Activated T-helper 1 cell treated with anti-CD3 and anti-CD28 coated beads, Interleukin-12 subunit alpha, Interleukin-12 subunit beta, Interleukin-2, Interleukin-4 antibody, amounts not matched to agents 30 ng/mL and 10 ng/mL and 1 ng/mL, durations not matched to agents 14 hours and 24 hours and 36 hours (primary cell): ENCODE measurements at regions of chr7 and their contacts with region 1.

Region 1: GRCh38 chr7:101217388-101218235 is at the starts of genes PLOD3 and ZNHIT1:
- DNase-seq: peak; percentile 92
- H3K4me3 Mint-ChIP-seq: peak within 1 kb of the TSS; percentile 99
- H3K27ac Mint-ChIP-seq: peak within 1 kb of the TSS; percentile 92
- H3K4me1 Mint-ChIP-seq: peaks cover 35% of the 10 kb centered on the region
- H3K27me3 Mint-ChIP-seq: no peaks in the 10 kb centered on the region
- total RNA-seq, gene PLOD3: 65.2 and 68.9 TPM in 2 replicates
- total RNA-seq, gene ZNHIT1: 49.7 and 53.4 TPM in 2 replicates

Region 2: GRCh38 chr7:101085162-101085987 is 132.2 kb before region 1 on chr7 and contains the start of gene TRIM56:
- intact Hi-C with region 1: loop called (anchors 2 kb)
- DNase-seq: peak; percentile 76
- H3K4me3 Mint-ChIP-seq: peak within 1 kb of the TSS; percentile 98
- H3K27ac Mint-ChIP-seq: peak within 1 kb of the TSS; percentile 98
- H3K4me1 Mint-ChIP-seq: peaks cover 31% of the 10 kb centered on the region
- H3K27me3 Mint-ChIP-seq: no peaks in the 10 kb centered on the region
- total RNA-seq, gene TRIM56: 41.2 and 45.7 TPM in 2 replicates

Region 3: DNA sequence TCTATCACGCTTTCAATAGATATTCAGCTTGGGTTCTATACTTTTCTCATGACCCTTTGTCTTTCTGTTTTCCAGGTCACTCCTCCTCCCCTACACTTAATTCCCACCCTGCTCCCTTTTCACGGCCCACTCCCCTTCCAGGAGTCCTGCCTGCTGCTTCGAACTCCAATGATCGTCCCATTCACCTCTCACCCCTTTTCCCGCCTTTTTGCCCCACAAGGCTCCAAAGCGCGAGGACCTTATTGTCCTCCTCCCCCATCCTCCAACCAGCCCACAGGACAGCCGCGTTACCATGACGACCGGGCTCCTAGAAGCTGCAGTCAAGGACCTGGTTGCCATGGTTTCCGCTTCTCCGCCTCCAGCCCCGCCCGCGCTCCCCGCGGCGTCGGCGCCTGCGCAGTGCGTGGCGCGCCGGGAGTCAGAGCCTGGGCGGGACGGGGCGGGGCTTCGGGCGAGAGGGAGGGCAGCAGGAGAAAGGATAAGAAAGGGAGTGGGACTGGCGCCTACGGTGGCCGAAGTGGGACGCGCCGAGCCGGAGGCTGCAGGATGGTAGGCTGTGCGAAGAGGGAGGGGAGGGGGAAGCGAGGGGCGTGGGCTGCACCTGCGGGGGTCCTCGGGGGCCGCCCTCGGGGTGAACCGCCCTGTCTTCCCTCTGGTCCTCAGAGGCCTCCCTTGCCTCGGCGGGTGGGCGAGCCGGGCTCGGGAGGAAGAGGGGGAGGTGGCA is 63.5 kb before region 1 on chr7 and contains the start of gene AP1S1:
- intact Hi-C with region 1: loop called (anchors 1 kb)
- DNase-seq: peak; percentile 92
- H3K4me3 Mint-ChIP-seq: peak within 1 kb of the TSS; percentile 83
- H3K27ac Mint-ChIP-seq: peak within 1 kb of the TSS; percentile 57
- H3K4me1 Mint-ChIP-seq: peaks cover 14% of the 10 kb centered on the region
- H3K27me3 Mint-ChIP-seq: peaks cover 15% of the 10 kb centered on the region
- total RNA-seq, gene AP1S1: 45.7 and 53.3 TPM in 2 replicates

Region 4: DNA sequence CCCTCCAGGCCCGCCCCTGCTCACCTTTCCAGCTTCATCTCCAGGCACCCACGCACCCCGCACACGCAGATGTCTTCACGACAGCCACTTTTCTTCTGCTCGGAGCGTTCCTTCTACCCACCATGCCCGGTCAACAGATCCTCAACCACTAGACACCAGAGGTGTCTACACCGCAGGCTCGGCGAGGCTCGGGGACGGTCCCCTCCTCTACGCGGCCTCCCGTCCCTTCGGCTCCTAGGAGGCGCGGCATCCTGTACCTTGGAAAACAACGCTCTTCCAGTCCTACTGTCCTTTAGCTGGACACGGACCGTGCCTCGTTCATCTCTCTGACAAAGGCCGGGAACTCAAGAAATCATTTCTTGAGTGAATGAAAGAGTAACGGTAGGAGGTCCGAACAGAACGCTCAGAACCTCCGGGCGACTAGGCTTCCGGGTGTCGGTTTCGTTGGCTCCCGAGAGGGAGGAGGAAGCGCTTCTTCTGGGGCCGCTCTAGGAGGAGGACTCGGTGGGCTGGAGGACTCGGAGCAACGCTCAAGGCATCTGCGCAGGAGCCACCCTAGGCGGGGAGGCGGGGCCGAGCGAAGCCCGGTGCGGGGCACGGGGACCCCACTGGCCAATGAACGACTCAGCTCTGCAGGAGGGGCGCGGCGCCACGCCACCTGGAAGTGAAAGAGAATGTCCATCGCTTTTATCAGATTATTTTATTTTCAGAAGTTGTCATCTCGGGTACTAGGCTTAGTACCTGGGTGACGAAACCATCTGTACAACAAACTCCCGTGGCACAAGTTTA is 34.5 kb after region 1 on chr7:
- intact Hi-C with region 1: loop called (anchors 1 kb)
- DNase-seq: peak; percentile 98
- H3K4me3 Mint-ChIP-seq: peak overlapping the region; percentile 98
- H3K27ac Mint-ChIP-seq: peak overlapping the region; percentile 98
- H3K4me1 Mint-ChIP-seq: peaks cover 30% of the 10 kb centered on the region
- H3K27me3 Mint-ChIP-seq: peaks cover 5% of the 10 kb centered on the region